ENCODE measurements at regions of chr1 and their contacts with region 1.

Region 1: GRCh38 chr1:207017615-207018559 is 14.7 kb downstream of the C1orf116 start:
- DNase-seq: no peak
- H3K4me3 Mint-ChIP-seq: no peak overlapping the region
- H3K27ac Mint-ChIP-seq: peak overlapping the region; percentile 98
- H3K4me1 Mint-ChIP-seq: peaks cover 89% of the 10 kb centered on the region
- H3K27me3 Mint-ChIP-seq: no peaks in the 10 kb centered on the region
- CTCF ChIP-seq: no peak

Region 2: DNA sequence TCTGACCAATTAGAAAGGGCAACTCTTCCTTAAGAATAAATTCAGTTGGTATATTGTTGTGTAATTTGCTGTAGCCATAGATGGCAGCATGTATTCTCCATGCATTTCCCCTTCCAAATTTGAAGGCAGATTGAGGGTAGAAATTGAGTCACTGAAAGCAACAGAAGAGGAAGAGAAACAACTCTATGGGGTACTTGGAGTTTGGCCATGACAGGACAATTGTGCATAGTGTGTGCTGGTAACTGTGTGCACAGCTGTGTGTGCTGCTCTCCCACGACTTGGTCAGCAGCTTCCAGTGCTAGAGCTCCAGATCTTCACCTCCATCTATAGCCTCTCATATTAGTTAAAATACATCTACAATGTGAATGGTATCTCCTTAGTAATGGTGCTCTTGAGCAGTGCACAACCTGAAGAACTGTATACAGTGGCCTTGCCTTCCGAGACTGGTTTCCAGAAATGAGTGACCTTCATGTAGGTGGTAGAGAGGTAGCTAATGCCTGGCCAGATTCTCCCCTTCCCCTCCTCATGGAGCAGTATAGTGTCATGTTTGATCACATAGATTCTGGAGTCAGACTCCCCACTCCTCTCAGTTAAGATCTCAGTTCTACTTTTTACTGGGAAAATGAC is 46.7 kb before region 1 on chr1:
- CTCF ChIA-PET with region 1: no interaction called
- intact Hi-C with region 1: no loop called
- DNase-seq: no peak
- H3K4me3 Mint-ChIP-seq: no peak overlapping the region
- H3K27ac Mint-ChIP-seq: no peak overlapping the region
- H3K4me1 Mint-ChIP-seq: peaks cover 45% of the 10 kb centered on the region
- H3K27me3 Mint-ChIP-seq: no peaks in the 10 kb centered on the region
- CTCF ChIP-seq: no peak

Region 3: DNA sequence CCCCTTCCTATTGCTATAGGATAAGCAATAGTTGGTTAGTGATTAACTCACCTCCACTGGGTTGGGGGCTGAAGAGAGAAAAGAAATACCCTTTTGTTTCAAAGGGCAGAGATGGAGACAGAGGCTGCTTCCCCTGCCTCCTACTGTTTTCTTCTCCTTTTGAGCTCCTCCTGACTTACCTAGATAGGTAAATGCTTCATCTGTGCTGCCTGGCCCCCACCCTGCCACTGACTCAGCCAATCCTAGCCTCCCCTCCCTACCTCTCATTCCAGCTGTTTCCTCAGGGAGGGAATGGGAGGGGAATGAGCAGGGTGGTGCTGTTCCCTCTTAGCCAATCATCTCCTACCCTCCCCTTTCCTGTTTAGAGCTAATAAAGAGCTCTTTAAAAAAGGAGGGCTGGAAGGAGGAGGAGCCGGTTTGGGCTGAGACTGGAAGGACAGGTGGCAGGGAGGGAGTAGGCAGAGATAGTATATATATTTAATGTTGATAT is 14.7 kb after region 1 on chr1 and contains the start of gene C1orf116:
- CTCF ChIA-PET with region 1: interaction called, 27 read pairs
- intact Hi-C with region 1: no loop called
- DNase-seq: peak; percentile 92
- H3K4me3 Mint-ChIP-seq: peak within 1 kb of the TSS; percentile 92
- H3K27ac Mint-ChIP-seq: peak within 1 kb of the TSS; percentile 98
- H3K4me1 Mint-ChIP-seq: peaks cover 27% of the 10 kb centered on the region
- H3K27me3 Mint-ChIP-seq: no peaks in the 10 kb centered on the region
- CTCF ChIP-seq: no peak
- total RNA-seq, gene C1orf116: 106 and 124 TPM in 2 replicates

Region 4: DNA sequence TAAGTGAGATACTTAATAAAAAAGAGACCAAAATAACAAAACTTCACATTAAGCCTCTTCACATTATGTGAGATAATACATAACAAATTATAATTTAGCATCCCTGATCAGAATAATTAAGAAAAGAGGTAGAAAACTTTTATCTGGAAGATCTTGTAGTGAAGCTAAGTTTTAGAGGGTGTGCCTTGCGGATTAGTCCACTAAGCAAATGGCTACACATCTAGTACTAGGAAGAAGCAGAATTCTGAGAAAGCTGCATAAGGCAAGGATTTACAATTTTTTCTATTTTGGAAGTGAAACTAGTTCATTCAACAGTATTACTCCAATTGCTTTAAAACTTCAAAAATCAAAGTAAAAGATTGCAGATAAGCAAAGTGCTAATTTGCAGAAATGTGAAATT is 29.6 kb after region 1 on chr1:
- CTCF ChIA-PET with region 1: interaction called, 10 read pairs
- intact Hi-C with region 1: no loop called
- DNase-seq: no peak
- H3K4me3 Mint-ChIP-seq: peak overlapping the region; percentile 97
- H3K27ac Mint-ChIP-seq: peak overlapping the region; percentile 52
- H3K4me1 Mint-ChIP-seq: peaks cover 58% of the 10 kb centered on the region
- H3K27me3 Mint-ChIP-seq: no peaks in the 10 kb centered on the region
- CTCF ChIP-seq: no peak

Region 5: GRCh38 chr1:207052911-207053769 is 35.3 kb after region 1 on chr1 and contains the start of gene PFKFB2:
- CTCF ChIA-PET with region 1: interaction called, 10 read pairs
- intact Hi-C with region 1: no loop called
- DNase-seq: peak; percentile 100
- H3K4me3 Mint-ChIP-seq: peak within 1 kb of the TSS; percentile 97
- H3K27ac Mint-ChIP-seq: peak within 1 kb of the TSS; percentile 93
- H3K4me1 Mint-ChIP-seq: peaks cover 58% of the 10 kb centered on the region
- H3K27me3 Mint-ChIP-seq: no peaks in the 10 kb centered on the region
- CTCF ChIP-seq: peak; percentile 45
- total RNA-seq, gene PFKFB2: 52.0 and 54.4 TPM in 2 replicates

Region 6: GRCh38 chr1:207963427-207964194 is 945.7 kb after region 1 on chr1:
- CTCF ChIA-PET with region 1: no interaction called
- intact Hi-C with region 1: no loop called
- DNase-seq: peak; percentile 94
- H3K4me3 Mint-ChIP-seq: peak overlapping the region; percentile 72
- H3K27ac Mint-ChIP-seq: peak overlapping the region; percentile 53
- H3K4me1 Mint-ChIP-seq: peaks cover 22% of the 10 kb centered on the region
- H3K27me3 Mint-ChIP-seq: peaks cover 15% of the 10 kb centered on the region
- CTCF ChIP-seq: peak; percentile 97

Measured in Calu3 (cell line).